PC-9 (cell line): ENCODE measurements at regions of chr18 and their contacts with region 1.

Region 1: GRCh38 chr18:80147037-80147417 is 38.0 kb downstream of the ADNP2 start:
- DNase-seq: no peak
- H3K4me3 ChIP-seq: no peak overlapping the region
- H3K27ac ChIP-seq: no peak overlapping the region
- H3K4me1 ChIP-seq: no peaks in the 10 kb centered on the region
- H3K27me3 ChIP-seq: no peaks in the 10 kb centered on the region
- CTCF ChIP-seq: no peak

Region 2: DNA sequence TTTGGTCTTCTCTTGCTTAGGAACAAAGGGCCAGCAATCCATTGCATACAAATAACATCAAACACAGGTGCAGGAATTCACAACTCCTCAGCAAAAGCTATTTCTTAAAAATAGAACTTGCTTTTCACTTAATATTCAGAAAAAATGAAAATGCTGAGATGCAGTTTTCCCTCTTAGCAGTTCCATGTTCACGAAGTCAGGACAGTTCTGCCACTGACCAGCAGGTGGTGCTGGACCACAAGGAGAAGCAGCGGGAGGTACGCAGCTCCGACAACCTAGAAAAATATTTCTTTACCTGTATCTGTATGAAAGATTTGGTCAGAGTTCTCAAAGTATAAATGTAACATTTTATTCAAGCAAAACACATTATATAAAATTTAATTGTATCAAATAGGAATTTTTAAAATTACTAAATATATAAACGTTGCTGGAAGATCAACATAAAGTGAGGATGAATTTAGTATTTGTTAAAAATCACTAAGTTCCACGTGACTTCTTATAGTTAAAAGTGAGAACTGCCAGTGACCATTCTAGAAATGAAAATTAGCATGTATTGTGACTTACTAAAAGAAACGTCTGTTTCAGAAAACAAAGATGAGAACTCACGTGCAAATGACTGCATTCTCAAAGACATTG is 10.8 kb after region 1 on chr18:
- CTCF ChIA-PET with region 1: no interaction called
- POLR2A ChIA-PET with region 1: no interaction called
- intact Hi-C with region 1: no loop called
- DNase-seq: peak; percentile 30 to 39
- H3K4me3 ChIP-seq: no peak overlapping the region
- H3K27ac ChIP-seq: no peak overlapping the region
- H3K4me1 ChIP-seq: no peaks in the 10 kb centered on the region
- H3K27me3 ChIP-seq: no peaks in the 10 kb centered on the region
- CTCF ChIP-seq: peak; percentile 93

Region 3: GRCh38 chr18:80183273-80184050 is 36.4 kb after region 1 on chr18:
- CTCF ChIA-PET with region 1: no interaction called
- POLR2A ChIA-PET with region 1: no interaction called
- intact Hi-C with region 1: no loop called
- DNase-seq: no peak
- H3K4me3 ChIP-seq: no peak overlapping the region
- H3K27ac ChIP-seq: no peak overlapping the region
- H3K4me1 ChIP-seq: no peaks in the 10 kb centered on the region
- H3K27me3 ChIP-seq: peaks cover 80% of the 10 kb centered on the region
- CTCF ChIP-seq: no peak

Region 4: DNA sequence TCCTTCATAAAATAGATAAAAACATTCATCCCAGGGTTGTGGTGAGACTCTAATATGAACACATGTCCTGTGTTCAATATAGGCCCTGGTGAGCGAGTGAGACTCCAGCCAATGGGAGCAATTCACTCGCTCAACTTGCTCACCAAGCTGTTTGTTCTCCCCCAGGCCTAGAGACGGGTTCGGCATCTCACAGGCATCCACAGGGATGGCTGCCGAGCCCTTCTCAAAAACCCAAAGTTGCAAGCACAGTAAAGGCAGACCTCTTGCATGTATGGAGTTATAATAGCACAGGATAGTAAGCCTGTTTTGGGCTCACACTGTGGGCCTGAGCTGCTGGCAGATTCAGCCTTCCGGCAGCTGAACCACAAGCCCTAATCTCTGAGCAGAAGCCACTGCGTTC is 84.6 kb after region 1 on chr18:
- CTCF ChIA-PET with region 1: no interaction called
- POLR2A ChIA-PET with region 1: interaction called, 10 read pairs
- intact Hi-C with region 1: no loop called
- DNase-seq: no peak
- H3K4me3 ChIP-seq: no peak overlapping the region
- H3K27ac ChIP-seq: no peak overlapping the region
- H3K4me1 ChIP-seq: no peaks in the 10 kb centered on the region
- H3K27me3 ChIP-seq: peaks cover 7% of the 10 kb centered on the region
- CTCF ChIP-seq: no peak